Tibial artery (tissue), 4 donors: ENCODE measurements at regions of chr15 and their contacts with region 1.

Region 1: DNA sequence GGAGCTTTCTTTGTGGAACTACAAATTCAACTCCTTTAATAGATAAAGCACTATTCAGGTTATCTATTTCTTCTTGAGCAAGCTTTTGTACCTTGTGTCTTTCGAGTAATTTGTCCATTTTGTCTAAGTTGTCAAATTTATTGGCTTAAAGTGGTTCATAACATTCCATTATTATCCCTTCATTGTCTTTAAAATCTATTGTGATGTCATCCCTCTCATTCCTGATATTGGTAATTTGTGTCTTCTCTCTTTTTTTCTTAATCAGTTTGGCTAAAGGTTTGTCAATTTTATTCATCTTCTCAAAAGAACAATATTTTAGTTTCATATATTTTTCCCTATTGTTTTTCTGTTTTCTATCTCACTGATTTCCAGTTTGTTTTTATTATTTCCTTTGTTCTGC is 28.7 kb downstream of the WDR93 start:
- DNase-seq: no peak
- H3K4me3 ChIP-seq: no peak overlapping the region
- H3K27ac ChIP-seq: no peak overlapping the region
- H3K4me1 ChIP-seq: no peaks in the 10 kb centered on the region
- H3K27me3 ChIP-seq: no peaks in the 10 kb centered on the region
- CTCF ChIP-seq: no peak

Region 2: GRCh38 chr15:89768060-89768500 is 48.7 kb after region 1 on chr15:
- intact Hi-C with region 1: loop called (anchors 2 kb)
- DNase-seq: peak in 1 of 2 donors; percentile 46
- H3K4me3 ChIP-seq: no peak overlapping the region
- H3K27ac ChIP-seq: no peak overlapping the region
- H3K4me1 ChIP-seq: peaks cover 0 to 11% (median 0%) of the 10 kb centered on the region in 4 donors
- H3K27me3 ChIP-seq: no peaks in the 10 kb centered on the region
- CTCF ChIP-seq: no peak